ENCODE measurements at regions of chr1 and their contacts with region 1.

Region 1: DNA sequence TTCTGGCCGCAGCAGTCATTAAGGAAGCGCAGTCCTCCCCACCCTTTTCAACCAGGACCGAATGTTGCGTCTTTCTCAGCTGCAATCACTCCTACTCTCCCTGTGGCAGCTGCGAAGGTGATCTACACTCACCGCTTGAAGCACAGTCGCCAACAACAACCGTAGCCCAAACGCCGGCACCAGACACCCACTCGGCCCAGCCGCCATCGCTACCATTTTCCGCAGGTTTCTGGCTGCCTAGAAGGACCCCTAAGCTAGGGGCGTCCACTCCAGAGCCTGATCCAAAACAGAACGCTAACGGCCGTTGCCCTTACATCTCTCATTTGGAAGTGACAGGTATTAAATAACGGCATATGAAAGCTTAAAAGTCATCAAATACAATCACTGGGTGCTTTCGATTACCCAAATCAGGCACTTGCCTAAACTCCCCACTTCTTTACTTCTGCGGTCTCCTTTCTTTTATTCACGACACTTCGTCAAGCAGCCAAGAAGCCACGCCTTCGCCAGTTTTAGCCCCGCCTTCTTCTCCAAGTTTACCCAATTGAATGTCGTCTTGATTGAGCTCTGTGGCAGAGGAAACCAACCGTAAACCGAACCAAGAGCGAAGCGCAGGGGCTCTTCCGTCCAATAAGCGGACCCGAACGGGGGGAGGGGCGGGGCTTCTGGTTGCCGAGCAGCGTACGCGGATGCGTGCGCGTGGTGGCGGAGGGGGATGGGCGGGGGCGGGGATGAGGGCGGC is at the start of gene SELENOF:
- DNase-seq: peak; percentile 100
- H3K4me3 Mint-ChIP-seq: no peak within 1 kb of the TSS
- H3K27ac Mint-ChIP-seq: no peak within 1 kb of the TSS
- H3K4me1 Mint-ChIP-seq: peaks cover 28% of the 10 kb centered on the region
- H3K27me3 Mint-ChIP-seq: no peaks in the 10 kb centered on the region
- CTCF ChIP-seq: no peak
- total RNA-seq, gene SELENOF: 227 TPM in 2 replicates

Region 2: DNA sequence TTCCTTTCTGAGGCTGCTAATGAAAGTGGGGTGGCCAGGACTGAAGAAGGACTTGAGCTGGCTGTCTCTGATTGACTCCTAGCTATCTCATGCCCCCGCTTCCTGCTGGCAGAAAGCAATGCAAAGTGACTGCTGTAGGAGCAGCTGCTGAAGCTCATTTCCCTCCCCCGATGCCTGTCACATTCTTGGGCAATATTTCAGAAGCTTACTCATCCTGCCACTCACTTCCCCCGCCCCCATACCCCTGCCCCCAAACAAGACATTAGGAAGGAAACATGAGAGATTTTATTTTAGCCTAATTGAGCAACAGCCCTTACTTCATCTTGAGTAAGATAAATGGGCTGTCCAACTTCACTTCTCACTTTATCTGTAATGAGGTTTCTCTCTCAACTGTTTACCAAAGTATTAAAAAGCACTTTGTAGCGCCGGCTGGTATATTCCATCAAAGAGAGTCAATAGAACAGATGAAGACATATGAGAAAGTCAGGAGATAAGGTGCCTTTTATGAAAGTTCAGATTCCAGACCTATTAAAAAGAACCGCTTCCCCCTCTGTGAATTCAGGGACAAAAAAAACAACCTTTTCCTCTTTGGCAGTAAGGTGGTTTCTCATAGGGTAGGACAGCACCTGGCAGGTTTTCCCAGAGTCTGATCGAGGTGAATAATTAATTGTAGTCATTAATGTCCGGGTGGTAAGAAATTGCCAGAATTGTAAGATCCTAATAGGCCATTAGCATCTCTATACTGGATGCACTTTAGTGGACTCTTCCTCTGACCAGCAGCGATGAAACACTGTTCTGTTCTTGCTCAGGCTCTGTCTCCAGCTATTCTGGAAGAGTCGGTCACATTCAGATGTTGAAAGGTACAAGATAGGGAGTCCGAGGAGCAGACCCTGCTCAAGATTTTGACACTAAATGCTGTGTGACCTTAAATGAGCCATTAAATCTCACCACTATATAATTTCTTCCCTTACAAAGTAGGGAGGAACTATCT is 139.5 kb before region 1 on chr1:
- CTCF ChIA-PET with region 1: no interaction called
- POLR2A ChIA-PET with region 1: interaction called, 28 read pairs
- intact Hi-C with region 1: loop called (anchors 1 kb)
- DNase-seq: peak; percentile 93
- H3K4me3 Mint-ChIP-seq: peak overlapping the region; percentile 64
- H3K27ac Mint-ChIP-seq: peak overlapping the region; percentile 89
- H3K4me1 Mint-ChIP-seq: peaks cover 48% of the 10 kb centered on the region
- H3K27me3 Mint-ChIP-seq: no peaks in the 10 kb centered on the region
- CTCF ChIP-seq: no peak

Region 3: GRCh38 chr1:86866665-86867064 is 47.4 kb before region 1 on chr1:
- CTCF ChIA-PET with region 1: interaction called, 3 read pairs
- POLR2A ChIA-PET with region 1: interaction called, 6 read pairs
- intact Hi-C with region 1: loop called (anchors 5 kb)
- DNase-seq: peak; percentile 41
- H3K4me3 Mint-ChIP-seq: no peak overlapping the region
- H3K27ac Mint-ChIP-seq: no peak overlapping the region
- H3K4me1 Mint-ChIP-seq: peaks cover 10% of the 10 kb centered on the region
- H3K27me3 Mint-ChIP-seq: no peaks in the 10 kb centered on the region
- CTCF ChIP-seq: no peak

Region 4: DNA sequence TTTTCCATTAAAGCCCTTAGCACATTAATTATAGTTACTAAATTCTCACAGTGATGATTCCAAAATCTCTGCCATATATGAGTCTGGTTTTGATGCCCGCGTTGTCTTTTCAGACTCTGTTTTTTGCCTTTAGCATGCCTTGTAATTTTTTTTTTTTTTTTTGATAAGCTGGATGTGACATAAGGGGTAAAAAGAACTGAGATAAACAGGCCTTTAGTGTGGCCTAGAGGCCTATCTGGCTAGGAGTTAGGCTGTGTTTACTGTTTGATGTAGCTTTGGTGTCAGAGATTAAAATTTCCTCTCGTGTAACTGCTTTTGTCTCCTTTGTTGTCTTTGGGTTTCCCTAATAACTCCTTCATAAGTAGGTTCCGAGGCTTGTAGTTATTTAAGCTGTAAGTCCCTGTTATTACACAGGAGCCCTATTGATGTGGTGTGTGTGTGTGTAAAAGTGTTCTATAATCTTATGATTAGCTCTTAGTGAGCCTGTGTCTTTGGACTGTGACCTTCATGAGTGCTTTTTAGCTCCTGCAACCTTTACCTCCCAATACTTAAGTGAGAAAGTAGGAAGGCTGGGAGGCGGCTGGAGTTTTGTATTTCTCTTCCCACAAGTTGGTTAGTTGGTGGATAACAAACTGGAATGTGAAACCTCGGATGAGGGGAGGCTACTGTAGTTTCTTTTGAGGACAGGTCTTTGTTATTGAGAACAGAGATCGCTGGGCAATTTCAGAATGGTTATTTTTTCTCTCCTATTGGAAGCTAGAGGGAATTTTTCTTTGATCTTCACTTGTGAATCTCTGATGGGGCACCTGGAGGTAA is 19.7 kb after region 1 on chr1:
- CTCF ChIA-PET with region 1: no interaction called
- POLR2A ChIA-PET with region 1: interaction called, 33 read pairs
- intact Hi-C with region 1: no loop called
- DNase-seq: no peak
- H3K4me3 Mint-ChIP-seq: no peak overlapping the region
- H3K27ac Mint-ChIP-seq: no peak overlapping the region
- H3K4me1 Mint-ChIP-seq: peaks cover 12% of the 10 kb centered on the region
- H3K27me3 Mint-ChIP-seq: no peaks in the 10 kb centered on the region
- CTCF ChIP-seq: no peak

Region 5: DNA sequence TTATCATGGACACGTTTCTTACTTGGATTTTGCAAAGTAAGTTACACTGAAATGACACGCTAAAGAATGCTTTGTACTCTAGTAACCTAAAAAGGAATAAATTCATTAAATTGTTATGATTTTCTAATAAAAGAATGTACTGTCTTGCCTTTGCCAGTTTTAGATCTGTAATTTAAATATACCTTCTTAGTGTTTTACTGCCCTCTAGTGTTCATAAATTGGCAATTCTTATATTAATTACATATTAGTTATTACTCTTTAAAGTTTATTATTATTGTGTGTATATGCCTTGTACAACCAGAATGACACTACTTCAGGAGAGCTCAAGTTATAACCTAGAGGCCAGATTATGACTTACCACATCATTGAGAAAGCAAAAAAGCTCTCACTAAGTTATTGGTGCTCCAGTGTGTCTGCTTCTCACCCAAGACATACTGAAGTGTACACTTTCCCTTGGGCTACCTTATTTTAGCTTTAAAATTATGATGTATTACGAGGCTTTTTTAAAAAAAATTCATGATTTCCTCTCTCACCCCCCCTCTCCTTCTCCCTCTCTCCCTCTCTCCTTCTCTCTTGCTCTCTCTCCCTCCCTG is 170.3 kb after region 1 on chr1:
- CTCF ChIA-PET with region 1: interaction called, 5 read pairs
- POLR2A ChIA-PET with region 1: interaction called, 12 read pairs
- intact Hi-C with region 1: no loop called
- DNase-seq: peak; percentile 35
- H3K4me3 Mint-ChIP-seq: no peak overlapping the region
- H3K27ac Mint-ChIP-seq: peak overlapping the region; percentile 36
- H3K4me1 Mint-ChIP-seq: no peaks in the 10 kb centered on the region
- H3K27me3 Mint-ChIP-seq: no peaks in the 10 kb centered on the region
- CTCF ChIP-seq: peak; percentile 41

Measured in MCF 10A (cell line).